ENCODE measurements at regions of chr17 and their contacts with region 1.

Region 1: GRCh38 chr17:8673612-8674011 is 43.1 kb upstream of the MYH10 start:
- DNase-seq: no peak
- H3K4me3 ChIP-seq: no peak overlapping the region
- H3K27ac ChIP-seq: no peak overlapping the region
- H3K27me3 ChIP-seq: no peaks in the 10 kb centered on the region
- CTCF ChIP-seq: no peak

Region 2: GRCh38 chr17:8698162-8699061 is 24.8 kb after region 1 on chr17:
- CTCF ChIA-PET with region 1: no interaction called
- POLR2A ChIA-PET with region 1: interaction called, 10 read pairs
- DNase-seq: peak; percentile 69
- H3K4me3 ChIP-seq: peak overlapping the region; percentile 5; the same call in 1 of the 2 replicates
- H3K27ac ChIP-seq: peak overlapping the region; percentile 98
- H3K27me3 ChIP-seq: peaks cover 6% of the 10 kb centered on the region
- CTCF ChIP-seq: 0 out of 2 replicates have a peak, but pooled peaks have one; percentile 16

Measured in AG04450 (cell line).